Body of pancreas (tissue), 4 donors: ENCODE measurements at regions of chr6 and their contacts with region 1.

Region 1: GRCh38 chr6:28252009-28252975 is at the start of gene ZKSCAN4:
- DNase-seq: peak; percentile 72 to 84 (median 78)
- ATAC-seq: peak; percentile 96
- H3K4me3 ChIP-seq: peak within 1 kb of the TSS; percentile 80 to 93
- H3K27ac ChIP-seq: peak within 1 kb of the TSS in 2 of 4 donors; percentile 30 to 54
- H3K4me1 ChIP-seq: peaks cover 14% of the 10 kb centered on the region
- H3K27me3 ChIP-seq: no peaks in the 10 kb centered on the region
- CTCF ChIP-seq: no peak
- POLR2A ChIP-seq: peak in 1 of 3 donors; percentile 21
- total RNA-seq, gene ZKSCAN4: 2.3 to 2.6 TPM

Region 2: GRCh38 chr6:28124102-28124970 is 128.0 kb before region 1 on chr6 and contains the start of gene ZSCAN16:
- intact Hi-C with region 1: loop called (anchors 10 kb)
- DNase-seq: peak; percentile 78 to 88 (median 82)
- ATAC-seq: peak; percentile 97
- H3K4me3 ChIP-seq: peak within 1 kb of the TSS; percentile 48 to 64
- H3K27ac ChIP-seq: peak within 1 kb of the TSS in 3 of 4 donors; percentile 17 to 67 (median 66)
- H3K4me1 ChIP-seq: peaks cover 15% of the 10 kb centered on the region
- H3K27me3 ChIP-seq: no peaks in the 10 kb centered on the region
- CTCF ChIP-seq: peak in 1 of 7 experiments; percentile 8
- POLR2A ChIP-seq: peak in 2 of 3 donors; percentile 58 to 60
- total RNA-seq, gene ZSCAN16: 1.3 to 5.9 TPM

Region 3: DNA sequence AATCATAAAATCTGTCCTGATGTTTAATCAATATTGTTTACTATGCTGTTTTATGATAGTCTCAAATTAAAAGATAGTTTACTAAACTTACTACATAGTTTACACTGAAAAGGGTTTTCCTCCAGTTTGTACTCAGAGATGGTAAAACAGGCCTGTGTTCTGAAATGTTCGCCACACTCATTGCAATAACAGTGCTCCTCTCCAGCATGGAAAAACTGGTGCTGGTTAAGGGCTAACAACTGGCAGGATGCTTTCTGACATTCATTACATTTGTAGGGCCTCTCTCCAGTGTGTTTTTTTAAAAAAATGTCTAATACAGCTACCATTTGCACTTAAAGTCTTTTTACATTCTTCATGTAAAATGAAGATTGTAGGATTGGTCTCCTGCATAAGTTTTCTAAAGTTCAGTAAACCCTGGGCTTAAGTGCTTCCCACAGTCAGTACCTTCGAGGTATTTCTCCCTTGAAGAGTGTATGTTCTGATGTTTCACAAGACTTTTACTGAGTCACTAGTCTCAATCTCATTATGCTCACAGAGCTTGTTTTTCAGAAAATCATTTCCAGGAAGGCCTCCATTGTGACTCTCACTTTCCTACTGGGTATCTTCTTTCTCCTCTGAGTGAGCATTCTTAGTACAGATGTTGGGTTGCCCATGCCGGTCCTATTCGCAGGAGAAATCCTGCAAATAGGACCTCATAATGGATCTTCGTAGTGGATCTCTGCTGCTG is 155.9 kb after region 1 on chr6:
- intact Hi-C with region 1: no loop called
- DNase-seq: no peak
- ATAC-seq: no peak
- H3K4me3 ChIP-seq: no peak overlapping the region
- H3K27ac ChIP-seq: no peak overlapping the region
- H3K4me1 ChIP-seq: no peaks in the 10 kb centered on the region
- H3K27me3 ChIP-seq: no peaks in the 10 kb centered on the region
- CTCF ChIP-seq: no peak
- POLR2A ChIP-seq: no peak